GM13976 (cell line): ENCODE measurements at regions of chr15 and their contacts with region 1.

Region 1: DNA sequence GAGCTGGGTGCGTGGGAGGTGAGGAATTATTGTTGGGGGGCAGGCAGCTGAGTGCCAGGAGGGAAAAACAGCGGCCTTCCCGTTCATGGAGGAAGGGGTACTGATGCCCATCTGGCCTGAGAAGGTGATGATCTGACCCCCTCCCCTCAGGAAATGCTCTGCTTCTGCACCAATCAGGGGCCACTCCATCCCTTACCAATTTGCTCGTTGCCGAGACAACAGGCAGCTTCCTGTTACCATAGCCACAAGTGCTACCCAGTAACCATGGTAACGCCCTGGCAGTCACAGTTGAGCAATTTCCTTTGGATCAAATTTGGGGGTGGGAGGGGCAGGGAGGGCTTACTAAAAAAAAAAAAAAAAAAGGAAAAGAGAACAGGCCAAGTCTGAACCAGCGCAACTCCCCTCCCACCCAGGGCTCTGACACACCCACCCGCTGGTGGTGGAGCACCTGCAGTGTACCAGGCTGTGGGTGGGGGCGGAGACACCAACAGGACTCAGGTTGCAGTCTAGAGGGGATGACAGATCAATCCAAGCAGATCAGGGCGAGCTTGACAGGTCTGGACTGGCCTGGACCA is 13.7 kb downstream of the CELF6 start:
- DNase-seq: peak; percentile 34
- CTCF ChIP-seq: no peak

Region 2: DNA sequence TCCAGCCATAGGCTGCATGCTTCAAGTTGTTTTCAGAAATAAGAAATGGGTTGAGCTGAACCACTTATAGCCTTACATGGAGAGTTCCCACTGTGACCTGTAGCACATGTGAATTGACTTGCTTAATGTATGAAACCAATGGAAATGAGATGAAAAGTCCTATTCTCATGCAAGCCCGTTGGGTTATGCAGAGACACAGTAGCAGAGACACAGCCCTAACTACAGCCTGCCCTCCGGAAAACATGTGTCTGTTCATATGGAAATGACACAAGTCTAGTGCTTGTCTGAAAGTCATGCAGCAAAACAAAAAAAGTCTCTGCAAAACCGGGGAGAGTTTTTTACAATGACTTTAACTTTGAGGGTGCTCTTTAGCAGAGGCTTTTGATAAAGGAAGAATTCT is 365.2 kb after region 1 on chr15:
- in situ Hi-C with region 1: loop called (anchors 10 kb)
- DNase-seq: no peak
- CTCF ChIP-seq: no peak

Region 3: DNA sequence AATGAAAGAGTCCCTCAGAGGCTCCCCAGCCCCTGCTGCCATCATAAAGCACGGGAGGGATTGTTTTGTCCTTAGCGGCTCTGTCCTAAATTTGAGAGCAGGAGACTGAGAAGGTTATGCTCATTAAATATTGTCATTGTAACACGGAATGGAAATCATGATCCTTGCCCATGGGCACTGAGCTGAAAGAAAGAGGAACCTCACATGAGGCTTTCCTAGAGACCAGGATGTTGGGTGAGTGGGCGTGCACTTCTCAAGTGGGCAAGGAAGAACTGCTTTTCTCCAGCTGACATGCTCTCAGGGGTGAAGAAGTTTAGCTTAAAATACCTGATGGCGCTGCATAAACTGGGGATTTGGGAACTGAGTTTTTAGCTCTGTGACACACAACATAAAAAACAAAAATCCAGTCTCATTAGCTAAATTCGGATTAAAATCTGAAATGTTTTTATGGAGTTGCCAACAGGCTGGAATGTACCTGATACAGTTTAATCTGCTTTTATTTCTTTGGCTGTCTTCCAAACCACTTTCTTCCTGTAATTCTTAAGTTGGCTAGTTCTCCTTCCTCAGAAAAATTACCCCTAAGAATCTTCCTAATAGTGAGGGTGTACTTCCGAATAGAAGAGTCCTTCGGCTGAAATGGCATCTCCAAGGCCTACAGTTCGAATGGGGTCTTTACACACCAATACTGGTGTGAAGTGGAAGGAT is 445.6 kb after region 1 on chr15:
- in situ Hi-C with region 1: no loop called
- DNase-seq: no peak
- CTCF ChIP-seq: no peak

Region 4: GRCh38 chr15:72784238-72784876 is 478.1 kb after region 1 on chr15:
- in situ Hi-C with region 1: no loop called
- DNase-seq: peak; percentile 62
- CTCF ChIP-seq: peak; percentile 29